ENCODE measurements at regions of chr4 and their contacts with region 1.

Region 1: GRCh38 chr4:83328521-83329187 is 6.0 kb downstream of the HPSE start:
- DNase-seq: no peak
- ATAC-seq: no peak

Region 2: GRCh38 chr4:81919238-81919637 is 1409.4 kb before region 1 on chr4:
- intact Hi-C with region 1: loop called (anchors 5 kb)
- DNase-seq: no peak
- ATAC-seq: peak; percentile 34